ENCODE measurements at regions of chr22 and their contacts with region 1.

Region 1: DNA sequence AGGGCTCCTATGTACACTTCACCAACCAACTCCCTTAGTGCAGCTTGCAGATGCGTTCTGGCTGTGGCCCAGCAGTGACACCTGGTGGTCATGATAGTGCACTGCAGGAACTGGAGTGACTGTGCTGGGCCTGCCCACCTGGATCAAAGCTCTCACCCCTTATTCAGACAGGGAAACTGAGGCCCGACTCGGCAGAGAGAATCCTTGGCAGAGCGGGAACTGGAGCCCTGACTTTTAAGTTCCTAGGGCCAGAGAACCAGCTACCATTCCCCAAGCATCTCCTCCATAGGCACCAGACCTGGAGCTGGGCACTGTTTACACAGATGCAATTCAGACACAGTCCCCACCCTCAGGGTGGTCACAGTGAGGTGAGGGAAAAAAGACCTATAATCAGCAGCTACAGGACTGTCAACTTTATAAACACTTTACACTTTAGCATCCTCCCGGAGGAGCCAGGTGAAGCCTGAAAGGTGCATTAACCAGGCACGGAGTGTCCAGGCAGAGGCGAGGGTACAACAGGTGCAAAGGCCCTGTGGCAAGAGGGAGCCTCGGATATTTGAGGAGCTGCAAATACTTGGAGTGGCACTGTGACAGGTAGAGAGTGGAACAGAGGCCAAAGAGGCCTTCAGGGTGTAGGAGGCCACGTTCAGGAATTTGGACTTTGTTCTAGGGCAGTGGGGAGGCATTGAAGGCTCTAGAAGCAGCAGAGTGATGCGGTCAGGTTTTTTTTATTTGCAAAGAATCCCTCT is 22.0 kb downstream of the RHBDD3 start:
- DNase-seq: no peak
- ATAC-seq: peak; percentile 96
- H3K4me3 ChIP-seq: no peak overlapping the region
- H3K27ac ChIP-seq: no peak overlapping the region
- H3K4me1 ChIP-seq: no peaks in the 10 kb centered on the region
- H3K27me3 ChIP-seq: no peaks in the 10 kb centered on the region
- CTCF ChIP-seq: peak; percentile 92 to 98 (median 96)
- EP300 ChIP-seq: no peak
- POLR2A ChIP-seq: no peak
- RAD21 ChIP-seq: peak; percentile 95

Region 2: DNA sequence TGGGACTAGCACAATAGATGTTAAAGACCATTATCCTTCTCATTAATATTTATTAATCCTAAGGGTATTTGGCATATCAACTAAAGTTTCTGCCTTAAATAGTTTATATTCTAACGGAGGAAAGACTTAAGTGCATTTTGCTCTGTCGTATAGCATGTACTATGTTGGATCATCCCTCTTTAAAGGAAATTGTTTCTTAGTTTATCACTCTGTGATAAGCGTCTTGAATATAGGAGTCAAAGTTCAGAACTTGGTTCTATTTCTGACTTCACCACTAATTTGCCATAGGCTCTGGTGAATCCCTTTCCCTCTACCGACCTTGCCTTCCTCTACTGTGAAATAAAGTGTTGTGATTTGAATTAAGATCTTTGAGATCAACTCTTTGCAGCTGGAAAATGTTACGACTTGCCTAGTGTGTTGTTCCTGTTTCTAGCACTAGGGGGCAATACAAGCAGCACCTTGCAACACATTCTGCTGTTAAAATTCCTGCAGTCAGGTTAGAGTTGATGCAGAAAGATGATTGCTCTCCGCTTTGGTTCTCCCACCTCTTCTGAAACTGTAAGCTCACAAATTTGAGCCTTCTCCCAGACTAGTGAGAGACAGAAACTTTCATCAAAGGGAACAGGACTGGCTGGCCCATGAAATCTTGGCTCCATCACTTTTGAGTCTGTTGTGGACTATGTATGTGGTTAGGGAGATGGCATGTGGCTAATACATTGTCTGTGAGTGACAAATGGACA is 390.3 kb before region 1 on chr22:
- CTCF ChIA-PET with region 1: interaction called, 8 read pairs
- POLR2A ChIA-PET with region 1: no interaction called
- RAD21 ChIA-PET with region 1: interaction called, 4 read pairs
- SMC1A ChIA-PET with region 1: no interaction called
- in situ Hi-C with region 1: loop called (anchors 5 kb)
- intact Hi-C with region 1: loop called (anchors 1 kb)
- DNase-seq: peak; percentile 27
- ATAC-seq: peak; percentile 79
- H3K4me3 ChIP-seq: no peak overlapping the region
- H3K27ac ChIP-seq: no peak overlapping the region
- H3K4me1 ChIP-seq: no peaks in the 10 kb centered on the region
- H3K27me3 ChIP-seq: no peaks in the 10 kb centered on the region; a peak in 1 of 4 replicates
- CTCF ChIP-seq: peak; percentile 85 to 90 (median 87); a peak in 5 of 6 replicates
- EP300 ChIP-seq: no peak
- POLR2A ChIP-seq: no peak
- RAD21 ChIP-seq: peak; percentile 94

Region 3: GRCh38 chr22:29112102-29112501 is 133.7 kb before region 1 on chr22:
- CTCF ChIA-PET with region 1: interaction called, 14 read pairs
- POLR2A ChIA-PET with region 1: no interaction called
- RAD21 ChIA-PET with region 1: interaction called, 7 read pairs
- SMC1A ChIA-PET with region 1: interaction called, 3 read pairs
- in situ Hi-C with region 1: no loop called
- intact Hi-C with region 1: no loop called
- DNase-seq: no peak
- ATAC-seq: no peak; the same call in 2 of the 3 replicates
- H3K4me3 ChIP-seq: no peak overlapping the region
- H3K27ac ChIP-seq: no peak overlapping the region
- H3K4me1 ChIP-seq: no peaks in the 10 kb centered on the region
- H3K27me3 ChIP-seq: no peaks in the 10 kb centered on the region; a peak in 1 of 4 replicates
- CTCF ChIP-seq: peak in 2 of 3 experiments; percentile 6 to 7; a peak in 1 of 6 replicates
- EP300 ChIP-seq: no peak
- POLR2A ChIP-seq: no peak
- RAD21 ChIP-seq: peak; percentile 32; the same call in 1 of the 2 replicates

Region 4: GRCh38 chr22:29208879-29209623 is 36.8 kb before region 1 on chr22:
- CTCF ChIA-PET with region 1: interaction called, 62 read pairs
- POLR2A ChIA-PET with region 1: interaction called, 7 read pairs
- RAD21 ChIA-PET with region 1: interaction called, 26 read pairs
- SMC1A ChIA-PET with region 1: interaction called, 26 read pairs
- in situ Hi-C with region 1: no loop called
- intact Hi-C with region 1: loop called (anchors 2 kb)
- DNase-seq: peak; percentile 25
- ATAC-seq: peak; percentile 66
- H3K4me3 ChIP-seq: peak overlapping the region; percentile 65
- H3K27ac ChIP-seq: peak overlapping the region; percentile 66
- H3K4me1 ChIP-seq: peaks cover 29% of the 10 kb centered on the region
- H3K27me3 ChIP-seq: no peaks in the 10 kb centered on the region; a peak in 1 of 4 replicates
- CTCF ChIP-seq: no peak
- EP300 ChIP-seq: no peak
- POLR2A ChIP-seq: no peak
- RAD21 ChIP-seq: no peak

Region 5: GRCh38 chr22:29716814-29717545 is 471.2 kb after region 1 on chr22:
- CTCF ChIA-PET with region 1: no interaction called
- POLR2A ChIA-PET with region 1: no interaction called
- RAD21 ChIA-PET with region 1: no interaction called
- SMC1A ChIA-PET with region 1: no interaction called
- in situ Hi-C with region 1: no loop called
- intact Hi-C with region 1: no loop called
- DNase-seq: no peak
- ATAC-seq: peak; percentile 85
- H3K4me3 ChIP-seq: no peak overlapping the region
- H3K27ac ChIP-seq: no peak overlapping the region
- H3K4me1 ChIP-seq: no peaks in the 10 kb centered on the region
- H3K27me3 ChIP-seq: peaks cover 3 to 6% of the 10 kb centered on the region in 2 experiments; a peak in 2 of 4 replicates
- CTCF ChIP-seq: no peak
- EP300 ChIP-seq: no peak
- POLR2A ChIP-seq: no peak
- RAD21 ChIP-seq: no peak

Measured in GM12878 (cell line).